ENCODE measurements at regions of chr5 and their contacts with region 1.

Region 1: GRCh38 chr5:146426853-146427618 is 20.1 kb upstream of the TCERG1 start:
- DNase-seq: no peak
- H3K4me3 ChIP-seq: no peak overlapping the region
- H3K27ac ChIP-seq: no peak overlapping the region
- H3K4me1 ChIP-seq: peaks cover 3% of the 10 kb centered on the region
- H3K27me3 ChIP-seq: no peaks in the 10 kb centered on the region
- CTCF ChIP-seq: peak in 3 of 4 experiments; percentile 59 to 68 (median 67)
- POLR2A ChIP-seq: no peak

Region 2: DNA sequence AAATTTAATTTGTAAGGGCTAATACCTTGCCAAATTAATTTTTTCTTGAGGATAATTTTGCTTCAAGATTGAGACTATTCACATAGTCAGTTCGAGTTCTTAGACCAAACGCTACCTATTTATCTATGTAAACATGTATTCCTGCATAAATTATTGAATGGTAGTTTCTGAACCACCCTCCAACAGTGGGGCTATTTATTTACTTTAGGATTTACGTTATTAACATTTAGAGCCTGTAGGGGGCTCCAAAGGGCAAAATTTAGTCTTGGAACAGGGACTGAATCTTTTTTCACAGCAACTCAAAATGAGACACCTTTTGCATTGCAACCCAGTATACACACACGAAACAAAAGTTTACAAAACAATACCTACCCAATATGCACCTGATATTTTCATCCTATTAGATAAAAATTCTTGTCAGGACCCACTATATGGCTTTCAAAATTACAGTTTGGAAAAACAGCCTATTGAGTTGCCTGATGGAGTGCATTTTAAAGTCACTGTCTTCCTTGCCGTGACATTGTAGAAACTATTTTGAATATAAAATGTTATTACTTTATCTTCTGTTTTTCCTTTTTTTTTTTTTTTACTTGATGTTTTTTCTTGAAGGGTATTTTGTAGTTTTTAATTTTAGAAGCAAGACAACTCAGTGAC is 135.5 kb before region 1 on chr5:
- intact Hi-C with region 1: loop called (anchors 5 kb)
- DNase-seq: no peak
- H3K4me3 ChIP-seq: no peak overlapping the region
- H3K27ac ChIP-seq: no peak overlapping the region
- H3K4me1 ChIP-seq: no peaks in the 10 kb centered on the region
- H3K27me3 ChIP-seq: no peaks in the 10 kb centered on the region
- CTCF ChIP-seq: peak in 3 of 4 experiments; percentile 38 to 43 (median 40)
- POLR2A ChIP-seq: no peak

Measured in prostate gland (tissue), 2 donors.